ENCODE measurements at regions of chr14 and their contacts with region 1.

Region 1: GRCh38 chr14:94129111-94129757 is at the start of gene IFI27L2:
- DNase-seq: peak; percentile 43
- H3K4me3 ChIP-seq: peak within 1 kb of the TSS; percentile 26 to 33
- H3K27ac ChIP-seq: peak within 1 kb of the TSS; percentile 56 to 62
- H3K4me1 ChIP-seq: no peaks in the 10 kb centered on the region
- H3K27me3 ChIP-seq: no peaks in the 10 kb centered on the region
- CTCF ChIP-seq: peak in 2 of 4 experiments; percentile 16 to 31
- POLR2A ChIP-seq: no peak
- total RNA-seq, gene IFI27L2: 23.3 to 118 TPM

Region 2: DNA sequence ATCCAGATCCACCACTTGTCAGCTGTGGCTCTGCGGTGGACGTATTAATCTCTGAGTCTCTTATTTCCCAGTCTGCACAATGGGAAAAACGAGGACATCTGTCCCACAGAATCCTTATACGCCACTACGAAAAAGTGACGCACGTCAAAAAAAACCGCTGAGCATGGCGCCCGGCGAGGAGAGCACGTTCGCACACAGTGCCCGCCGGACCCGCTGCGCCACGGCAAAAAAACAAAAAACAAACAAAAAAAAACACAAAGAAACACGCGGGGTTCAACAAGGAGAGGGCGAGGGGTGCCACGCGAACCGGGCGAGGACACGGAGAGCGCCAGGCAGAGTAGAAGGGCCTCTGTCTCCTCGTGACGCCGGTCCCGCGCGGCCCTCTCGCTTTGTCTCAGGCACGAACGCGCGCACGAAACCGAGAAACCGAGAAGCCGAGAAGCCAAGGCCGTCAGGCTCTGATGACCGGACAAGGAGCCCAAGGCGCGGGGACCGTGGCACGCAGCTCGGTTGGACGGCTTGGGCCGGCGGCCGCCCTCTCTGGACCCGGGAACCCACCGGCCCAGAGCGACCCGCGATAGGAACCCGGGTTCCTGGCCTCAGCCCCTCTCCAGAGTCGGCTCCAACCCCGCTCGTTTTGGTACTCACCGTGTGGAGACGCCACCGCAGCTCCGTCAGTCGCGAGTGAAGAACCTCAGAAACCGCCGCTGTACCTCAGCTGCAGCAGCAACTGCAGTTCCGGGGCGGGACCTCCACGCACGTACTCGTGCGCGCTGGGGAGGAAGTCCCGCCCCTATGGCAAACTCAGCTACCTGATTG is 48.6 kb before region 1 on chr14 and contains the start of gene DDX24:
- intact Hi-C with region 1: loop called (anchors 5 kb)
- DNase-seq: peak; percentile 97
- H3K4me3 ChIP-seq: peak within 1 kb of the TSS; percentile 93 to 96
- H3K27ac ChIP-seq: peak within 1 kb of the TSS; percentile 87 to 88
- H3K4me1 ChIP-seq: peaks cover 16% of the 10 kb centered on the region
- H3K27me3 ChIP-seq: no peaks in the 10 kb centered on the region
- CTCF ChIP-seq: peak in 1 of 4 experiments; percentile 10
- POLR2A ChIP-seq: peak; percentile 98
- total RNA-seq, gene DDX24: 136 to 393 TPM

Region 3: DNA sequence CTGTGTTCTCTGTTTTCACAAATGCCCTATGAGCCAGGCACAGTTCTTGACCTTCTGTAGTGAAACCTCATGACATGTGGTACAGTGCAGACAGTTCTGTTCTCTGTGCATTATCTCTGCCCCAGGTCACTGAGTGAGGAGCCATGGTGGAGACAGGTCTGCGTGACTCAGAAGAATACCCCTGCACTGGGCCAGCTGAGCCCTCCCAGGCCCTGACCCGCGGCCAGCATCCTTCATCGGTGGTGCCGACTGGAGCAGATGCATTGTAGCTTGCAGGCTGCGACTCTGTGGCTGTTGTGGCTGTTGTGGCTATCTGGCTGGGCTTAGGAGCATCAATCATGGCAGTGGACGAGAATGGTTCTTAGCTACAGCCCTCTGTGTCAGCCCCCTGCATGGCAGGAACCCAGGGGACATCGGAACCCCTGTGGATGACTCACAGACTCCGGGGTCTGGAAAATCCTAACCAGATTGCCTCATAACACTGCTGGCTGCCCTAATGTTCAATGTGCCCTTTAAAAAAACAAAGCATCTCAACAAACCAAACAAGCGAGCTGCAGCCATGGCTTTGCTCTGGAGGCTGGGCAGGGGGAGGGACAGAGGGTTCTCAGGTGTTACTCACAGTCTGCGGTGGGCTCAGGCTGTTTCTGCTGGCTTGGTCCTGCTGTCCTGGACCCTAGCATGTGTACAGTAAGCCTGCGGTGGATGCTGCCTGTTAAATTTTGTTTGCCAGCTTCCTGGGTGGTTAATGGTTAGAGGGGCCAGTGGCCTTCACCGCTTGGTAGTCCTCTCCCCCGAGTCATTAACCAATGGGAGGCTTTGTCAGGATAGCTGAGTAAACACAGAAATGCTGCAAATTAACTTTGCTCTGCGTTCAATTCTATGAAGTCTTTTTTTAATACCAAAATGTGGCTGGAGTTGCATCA is 193.7 kb after region 1 on chr14 and contains the start of gene SERPINA6:
- intact Hi-C with region 1: no loop called
- DNase-seq: no peak
- H3K4me3 ChIP-seq: no peak within 1 kb of the TSS
- H3K27ac ChIP-seq: no peak within 1 kb of the TSS
- H3K4me1 ChIP-seq: no peaks in the 10 kb centered on the region
- H3K27me3 ChIP-seq: peaks cover 3% of the 10 kb centered on the region
- CTCF ChIP-seq: no peak
- POLR2A ChIP-seq: no peak
- total RNA-seq, gene SERPINA6: not detected

Measured in prostate gland (tissue), 2 donors.